ENCODE measurements at regions of chr15 and their contacts with region 1.

Region 1: GRCh38 chr15:69452692-69453521 is at the start of gene RPLP1:
- DNase-seq: peak; percentile 93 to 98 (median 97)
- H3K4me3 ChIP-seq: peak within 1 kb of the TSS; percentile 80 to 100 (median 92)
- H3K27ac ChIP-seq: peak within 1 kb of the TSS; percentile 54 to 83
- H3K4me1 ChIP-seq: peaks cover 12 to 33% (median 26%) of the 10 kb centered on the region in 4 experiments
- H3K27me3 ChIP-seq: no peaks in the 10 kb centered on the region

Region 2: GRCh38 chr15:69413822-69414700 is 38.8 kb before region 1 on chr15 and contains the start of gene KIF23:
- CTCF ChIA-PET with region 1: interaction called, 3 read pairs
- POLR2A ChIA-PET with region 1: interaction called, 11 read pairs
- DNase-seq: peak; percentile 96 to 97 (median 97)
- H3K4me3 ChIP-seq: peak within 1 kb of the TSS; percentile 88 to 94 (median 93)
- H3K27ac ChIP-seq: peak within 1 kb of the TSS; percentile 15 to 32
- H3K4me1 ChIP-seq: peaks cover 3 to 16% (median 9%) of the 10 kb centered on the region in 4 experiments
- H3K27me3 ChIP-seq: no peaks in the 10 kb centered on the region

Measured in common myeloid progenitor, CD34-positive (primary cell).